Activated naive CD4-positive, alpha-beta T cell treated with anti-CD3 and anti-CD28 coated beads for 36 hours (primary cell): ENCODE measurements at regions of chr5 and their contacts with region 1.

Region 1: DNA sequence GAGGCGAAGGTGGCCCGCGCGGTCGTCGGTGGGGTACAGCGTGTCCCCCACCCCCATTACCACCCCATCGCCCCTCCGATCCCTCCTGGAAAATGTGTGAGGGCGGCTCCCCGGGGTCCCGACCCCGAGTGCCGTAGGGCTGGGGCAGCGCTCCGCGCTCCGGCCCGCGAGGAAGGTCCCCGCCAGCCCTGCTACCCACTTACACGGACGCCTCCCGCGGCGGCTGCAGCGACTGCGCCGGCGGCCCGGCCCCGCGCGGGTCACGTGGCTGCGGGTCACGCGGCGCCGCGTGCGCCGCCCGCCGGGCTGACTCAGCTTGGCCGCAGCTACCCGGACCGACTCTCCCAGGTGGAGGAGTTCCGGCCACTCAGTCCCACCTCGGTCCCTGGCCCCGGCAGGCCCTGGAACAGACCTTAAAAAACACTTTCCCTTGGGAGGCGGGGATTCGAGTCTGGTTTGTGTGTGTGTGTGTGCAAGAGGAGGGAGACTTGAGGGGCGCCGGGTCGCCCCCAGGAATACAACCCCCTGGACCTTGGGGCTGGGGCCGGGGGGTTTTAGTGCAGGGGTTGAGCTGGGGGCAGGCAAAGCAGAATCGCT is at the start of gene GNPDA1:
- DNase-seq: peak; percentile 69
- H3K4me3 Mint-ChIP-seq: peak within 1 kb of the TSS; percentile 94
- H3K27ac Mint-ChIP-seq: peak within 1 kb of the TSS; percentile 94
- H3K4me1 Mint-ChIP-seq: peaks cover 76% of the 10 kb centered on the region
- H3K27me3 Mint-ChIP-seq: no peaks in the 10 kb centered on the region
- total RNA-seq, gene GNPDA1: 250 to 259 TPM

Region 2: GRCh38 chr5:141681695-141682641 is 330.9 kb before region 1 on chr5 and contains the start of gene ARAP3:
- CTCF ChIA-PET with region 1: no interaction called
- intact Hi-C with region 1: loop called (anchors 2 kb)
- DNase-seq: peak; percentile 41
- H3K4me3 Mint-ChIP-seq: peak within 1 kb of the TSS; percentile 63
- H3K27ac Mint-ChIP-seq: peak within 1 kb of the TSS; percentile 25
- H3K4me1 Mint-ChIP-seq: peaks cover 18% of the 10 kb centered on the region
- H3K27me3 Mint-ChIP-seq: no peaks in the 10 kb centered on the region
- total RNA-seq, gene ARAP3: 1.2 to 2.2 TPM

Region 3: DNA sequence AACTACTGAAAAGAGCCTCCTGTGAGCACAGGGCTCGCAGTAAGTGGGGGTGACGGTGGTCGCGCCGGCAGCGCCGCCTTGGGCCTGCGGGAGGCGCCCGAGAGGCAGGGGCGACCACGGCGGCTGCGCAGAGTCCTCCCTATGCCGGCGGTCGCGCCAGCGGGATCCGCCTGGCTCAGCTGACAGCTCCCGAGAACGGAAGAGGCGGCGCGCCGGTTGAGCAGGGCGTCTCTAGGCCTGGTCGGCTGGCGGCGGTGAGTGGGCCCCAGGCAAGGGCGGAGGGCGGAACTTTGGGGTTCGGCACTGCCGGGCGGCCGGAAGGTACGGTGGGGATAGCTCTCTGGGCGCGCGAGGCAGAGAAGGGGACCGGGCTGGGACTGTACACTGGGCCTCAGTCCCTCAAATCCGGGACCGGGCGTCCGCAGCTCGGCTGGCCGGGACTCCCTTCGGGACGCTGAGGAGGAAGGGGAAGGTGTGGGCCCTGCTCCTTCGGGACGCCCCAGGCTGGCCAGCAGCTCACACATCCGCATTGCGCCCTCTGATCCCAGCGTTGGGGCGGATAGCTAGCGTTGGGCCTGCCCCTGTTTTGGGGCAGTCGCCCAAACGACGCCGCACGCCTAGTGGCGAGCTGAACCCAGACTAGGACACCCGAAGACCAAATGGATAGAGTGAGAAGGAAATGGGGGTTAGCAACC is 43.8 kb before region 1 on chr5 and contains the start of gene RNF14:
- CTCF ChIA-PET with region 1: interaction called, 23 read pairs
- intact Hi-C with region 1: loop called (anchors 1 kb)
- DNase-seq: peak; percentile 96
- H3K4me3 Mint-ChIP-seq: peak within 1 kb of the TSS; percentile 93
- H3K27ac Mint-ChIP-seq: peak within 1 kb of the TSS; percentile 91
- H3K4me1 Mint-ChIP-seq: peaks cover 37% of the 10 kb centered on the region
- H3K27me3 Mint-ChIP-seq: no peaks in the 10 kb centered on the region
- total RNA-seq, gene RNF14: 29.8 to 35.6 TPM

Region 4: DNA sequence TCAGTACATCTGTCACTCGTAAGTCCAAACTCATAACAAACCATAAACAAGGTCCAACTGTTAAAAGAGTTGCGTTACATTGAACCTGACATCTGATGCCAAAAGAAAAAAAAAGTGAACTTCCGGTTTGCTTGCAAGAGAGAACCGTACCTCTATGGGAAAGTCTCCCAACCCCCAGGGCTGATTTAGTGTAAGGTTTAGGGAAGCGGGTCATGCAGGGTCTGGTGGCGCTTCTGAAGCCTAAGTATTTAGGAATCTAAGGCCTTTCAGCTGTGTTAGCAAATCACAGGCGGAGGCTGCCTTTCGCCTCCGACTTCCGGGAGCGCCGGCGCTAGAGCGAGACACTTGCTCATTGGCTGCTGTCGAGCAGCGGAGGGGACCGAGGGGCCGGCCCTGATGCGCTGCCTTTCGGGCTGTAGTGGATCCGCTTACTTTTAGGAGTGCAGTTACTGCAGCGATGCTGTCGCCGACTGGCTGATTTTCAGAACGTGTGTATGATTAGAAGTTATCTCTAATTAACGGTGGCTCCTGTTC is 11.9 kb after region 1 on chr5:
- CTCF ChIA-PET with region 1: interaction called, 17 read pairs
- intact Hi-C with region 1: loop called (anchors 1 kb)
- DNase-seq: peak; percentile 94
- H3K4me3 Mint-ChIP-seq: peak overlapping the region; percentile 91
- H3K27ac Mint-ChIP-seq: peak overlapping the region; percentile 99
- H3K4me1 Mint-ChIP-seq: peaks cover 21% of the 10 kb centered on the region
- H3K27me3 Mint-ChIP-seq: no peaks in the 10 kb centered on the region

Region 5: DNA sequence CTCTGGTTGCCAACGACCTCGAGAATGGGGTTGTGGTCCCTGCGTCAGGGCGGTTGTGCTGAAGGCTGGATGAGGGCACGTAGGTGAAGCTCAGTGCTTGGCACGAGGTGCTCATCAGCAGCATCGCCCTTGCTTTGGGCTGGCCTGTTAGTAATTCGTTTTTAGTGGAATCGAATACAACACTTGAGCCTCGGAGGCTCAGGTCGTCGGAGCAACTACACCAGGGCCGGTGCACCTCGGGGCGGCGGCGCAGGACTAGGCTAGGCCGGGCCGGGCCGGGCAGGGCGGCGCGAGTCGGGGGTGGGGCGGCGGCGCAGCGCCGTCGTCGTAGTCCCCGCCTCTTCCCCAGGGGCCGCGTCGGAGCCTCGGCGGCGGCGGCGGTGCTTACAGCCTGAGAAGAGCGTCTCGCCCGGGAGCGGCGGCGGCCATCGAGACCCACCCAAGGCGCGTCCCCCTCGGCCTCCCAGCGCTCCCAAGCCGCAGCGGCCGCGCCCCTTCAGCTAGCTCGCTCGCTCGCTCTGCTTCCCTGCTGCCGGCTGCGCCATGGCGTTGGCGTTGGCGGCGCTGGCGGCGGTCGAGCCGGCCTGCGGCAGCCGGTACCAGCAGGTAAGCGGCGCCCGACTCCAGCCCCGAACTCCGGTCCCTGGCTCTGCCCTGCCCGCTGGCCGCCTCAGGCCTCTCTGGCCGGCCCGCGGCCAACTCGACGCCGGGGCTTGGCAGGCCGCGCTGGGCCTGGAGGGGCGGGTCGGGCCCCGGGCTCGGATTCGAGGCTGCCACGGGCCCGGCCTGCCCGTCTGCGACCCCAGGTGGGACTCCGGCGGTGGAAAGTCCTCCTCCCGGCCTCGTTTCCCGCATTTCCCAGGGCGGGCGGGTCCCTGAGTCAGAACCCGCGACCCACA is 95.8 kb after region 1 on chr5 and contains the start of gene NDFIP1:
- CTCF ChIA-PET with region 1: interaction called, 121 read pairs
- intact Hi-C with region 1: loop called (anchors 1 kb)
- DNase-seq: peak; percentile 88
- H3K4me3 Mint-ChIP-seq: peak within 1 kb of the TSS; percentile 87
- H3K27ac Mint-ChIP-seq: peak within 1 kb of the TSS; percentile 97
- H3K4me1 Mint-ChIP-seq: peaks cover 68% of the 10 kb centered on the region
- H3K27me3 Mint-ChIP-seq: no peaks in the 10 kb centered on the region
- total RNA-seq, gene NDFIP1: 103 to 104 TPM

Region 6: GRCh38 chr5:142246258-142246657 is 233.4 kb after region 1 on chr5:
- CTCF ChIA-PET with region 1: no interaction called
- intact Hi-C with region 1: no loop called
- DNase-seq: no peak
- H3K4me3 Mint-ChIP-seq: no peak overlapping the region
- H3K27ac Mint-ChIP-seq: no peak overlapping the region
- H3K4me1 Mint-ChIP-seq: no peaks in the 10 kb centered on the region
- H3K27me3 Mint-ChIP-seq: no peaks in the 10 kb centered on the region

Region 7: GRCh38 chr5:142324871-142325724 is 312.2 kb after region 1 on chr5 and contains the start of gene SPRY4:
- CTCF ChIA-PET with region 1: no interaction called
- intact Hi-C with region 1: loop called (anchors 2 kb)
- DNase-seq: peak; percentile 95
- H3K4me3 Mint-ChIP-seq: peak within 1 kb of the TSS; percentile 85
- H3K27ac Mint-ChIP-seq: peak within 1 kb of the TSS; percentile 18
- H3K4me1 Mint-ChIP-seq: peaks cover 28% of the 10 kb centered on the region
- H3K27me3 Mint-ChIP-seq: peaks cover 55% of the 10 kb centered on the region
- total RNA-seq, gene SPRY4: 0.31 to 0.67 TPM

Region 8: DNA sequence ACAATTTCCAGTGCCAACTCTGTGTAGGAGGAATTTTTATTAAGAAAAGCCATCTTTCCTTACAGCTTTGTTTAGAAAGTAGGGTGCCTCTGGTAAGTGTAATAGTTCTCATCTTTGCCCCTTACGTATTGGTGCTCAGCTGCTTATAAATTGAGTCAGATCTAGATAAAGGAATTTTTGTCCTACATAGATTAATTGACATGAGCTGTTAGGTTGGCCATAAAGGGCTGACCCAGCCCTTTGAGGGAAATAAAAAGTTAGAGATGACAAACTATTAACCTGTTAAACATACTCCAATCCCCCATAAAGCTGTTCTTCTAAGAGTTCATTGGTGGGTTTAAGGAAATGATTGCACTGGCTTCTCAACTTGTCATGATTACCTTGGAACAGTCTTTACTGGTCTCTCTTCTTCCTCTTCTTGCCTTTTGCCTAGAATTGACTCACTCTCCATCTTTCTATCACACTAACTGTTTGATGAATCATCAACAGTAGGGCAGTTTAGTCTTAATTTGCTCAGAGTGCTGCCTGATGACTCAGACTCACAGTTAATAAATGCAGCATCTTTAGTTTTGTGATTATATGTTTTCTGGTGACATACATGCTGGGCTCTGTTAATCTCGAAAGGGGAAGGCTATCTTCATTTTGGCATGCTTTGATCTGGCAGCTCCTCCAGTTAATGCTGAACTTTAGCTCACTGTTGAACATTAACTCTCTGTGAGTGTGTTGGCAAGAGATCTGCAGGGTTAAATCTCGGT is 809.0 kb after region 1 on chr5:
- CTCF ChIA-PET with region 1: no interaction called
- intact Hi-C with region 1: loop called (anchors 1 kb)
- DNase-seq: peak; percentile 49
- H3K4me3 Mint-ChIP-seq: no peak overlapping the region
- H3K27ac Mint-ChIP-seq: peak overlapping the region; percentile 54
- H3K4me1 Mint-ChIP-seq: peaks cover 78% of the 10 kb centered on the region
- H3K27me3 Mint-ChIP-seq: no peaks in the 10 kb centered on the region